ENCODE measurements at regions of chr1 and their contacts with region 1.

Region 1: DNA sequence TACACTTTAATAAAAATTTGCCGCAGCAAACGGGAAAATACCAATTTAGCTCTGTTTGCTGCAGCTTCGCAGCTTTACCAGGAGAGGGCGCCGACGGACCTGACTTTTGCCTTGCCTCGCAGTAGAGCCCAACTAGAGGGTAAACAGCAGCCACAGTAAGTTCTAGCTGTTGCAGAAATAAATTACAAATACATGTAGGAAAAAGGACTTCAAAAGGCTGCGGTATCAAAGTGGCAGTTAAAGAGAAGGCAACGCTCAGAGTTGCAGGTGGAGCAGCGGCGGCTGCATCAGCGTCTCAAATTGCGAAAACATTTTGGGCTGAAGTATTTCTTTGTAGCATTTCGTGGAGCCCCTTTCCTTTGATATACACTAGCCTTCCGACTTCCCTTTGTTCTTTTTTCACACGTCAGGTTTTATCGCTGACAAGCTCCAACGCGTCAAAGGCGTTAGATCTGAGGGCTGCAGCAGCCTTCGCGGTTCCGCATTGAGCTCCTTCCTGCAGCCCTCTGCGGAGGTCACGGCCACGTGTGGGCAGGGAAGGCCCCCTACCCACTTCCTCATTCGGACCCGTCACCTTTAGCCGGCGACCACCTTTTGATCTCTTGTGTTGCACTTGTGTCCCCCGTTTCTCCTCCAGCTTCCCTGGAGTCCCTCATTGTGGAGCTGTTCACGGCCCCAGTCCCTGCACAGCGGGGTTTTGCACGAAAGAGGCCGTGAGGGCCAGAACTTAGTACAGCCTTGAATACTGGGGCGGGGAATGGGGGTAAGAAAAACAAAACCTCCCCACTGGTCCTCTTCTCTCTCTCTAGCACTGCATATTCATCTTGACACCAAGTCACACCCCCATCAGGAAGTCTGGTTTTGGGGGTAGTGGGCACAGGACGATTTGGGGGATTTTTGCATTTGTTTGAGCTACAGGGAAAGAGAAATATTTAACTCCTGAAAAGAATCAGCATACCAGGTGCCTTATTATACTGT is 72.8 kb downstream of the S1PR1 start:
- DNase-seq: peak; percentile 53
- ATAC-seq: peak; percentile 76 to 78

Region 2: DNA sequence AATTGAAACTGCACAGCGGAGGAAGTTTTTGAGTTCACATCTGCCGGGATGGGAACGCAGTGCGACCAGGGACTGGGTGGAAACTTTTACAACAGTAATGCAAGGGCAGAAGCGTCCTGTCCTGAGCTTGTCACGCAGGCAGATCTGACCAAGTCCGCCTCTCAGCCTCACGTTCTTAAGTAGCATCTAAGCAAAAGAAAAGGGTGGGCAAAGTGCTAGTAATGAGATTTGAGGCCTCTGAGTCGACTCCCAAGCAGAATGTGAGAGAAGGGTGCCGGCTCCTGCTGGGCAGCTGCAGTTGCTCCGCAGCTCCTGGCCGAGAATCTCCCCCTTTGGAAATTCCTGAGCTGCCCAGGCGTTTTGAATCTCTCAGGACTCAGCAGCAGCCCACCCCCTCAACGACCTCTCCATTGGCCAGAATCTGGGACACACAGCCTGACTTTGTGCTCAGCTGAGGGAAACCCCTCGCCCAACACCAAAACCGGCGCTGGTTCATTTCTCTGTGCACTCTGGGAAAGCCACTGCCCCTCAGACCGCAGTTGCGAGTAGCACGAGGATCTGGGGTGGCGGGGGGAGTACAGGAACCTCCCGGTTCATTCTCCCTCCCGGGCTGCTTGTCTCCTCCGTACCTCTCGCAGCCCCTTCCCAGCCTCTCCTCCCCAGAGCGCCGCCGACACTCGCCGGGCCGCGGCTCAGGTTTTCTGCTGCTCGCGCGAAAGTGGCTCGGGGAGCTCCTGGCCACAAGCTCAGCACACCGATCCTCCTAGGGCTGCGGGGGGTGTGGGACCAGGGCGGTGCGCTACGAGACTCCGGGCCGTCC is 73.7 kb before region 1 on chr1:
- intact Hi-C with region 1: no loop called
- DNase-seq: peak; percentile 59
- ATAC-seq: peak; percentile 32 to 52

Region 3: GRCh38 chr1:101357444-101357986 is 47.9 kb after region 1 on chr1:
- intact Hi-C with region 1: loop called in 1 of 2 experiments (anchors 5 kb)
- DNase-seq: no peak
- ATAC-seq: peak; percentile 89 to 93

Region 4: GRCh38 chr1:101438359-101438758 is 128.7 kb after region 1 on chr1:
- intact Hi-C with region 1: loop called in 1 of 2 experiments (anchors 5 kb)
- DNase-seq: no peak
- ATAC-seq: no peak

Measured in left cardiac atrium (tissue), 4 donors.